Activated CD4-positive, alpha-beta T cell treated with anti-CD3 and anti-CD28 coated beads for 36 hours (primary cell): ENCODE measurements at regions of chr14 and their contacts with region 1.

Region 1: GRCh38 chr14:64294672-64295413 is 672 bp upstream of the ESR2 start:
- DNase-seq: peak; percentile 94
- ATAC-seq: peak; percentile 81
- H3K4me3 Mint-ChIP-seq: peak overlapping the region; percentile 64
- H3K27ac Mint-ChIP-seq: no peak overlapping the region
- H3K4me1 Mint-ChIP-seq: peaks cover 20% of the 10 kb centered on the region
- H3K27me3 Mint-ChIP-seq: peaks cover 25% of the 10 kb centered on the region

Region 2: GRCh38 chr14:63641473-63642228 is 653.2 kb before region 1 on chr14 and contains the start of gene WDR89:
- CTCF ChIA-PET with region 1: no interaction called
- POLR2A ChIA-PET with region 1: no interaction called
- intact Hi-C with region 1: loop called in 1 of 2 experiments (anchors 10 kb)
- DNase-seq: peak; percentile 98
- ATAC-seq: peak; percentile 87
- H3K4me3 Mint-ChIP-seq: peak within 1 kb of the TSS; percentile 79
- H3K27ac Mint-ChIP-seq: peak within 1 kb of the TSS; percentile 97
- H3K4me1 Mint-ChIP-seq: peaks cover 43% of the 10 kb centered on the region
- H3K27me3 Mint-ChIP-seq: no peaks in the 10 kb centered on the region
- total RNA-seq, gene WDR89: 13.9 to 27.2 TPM

Region 3: GRCh38 chr14:64012720-64013119 is 282.1 kb before region 1 on chr14:
- CTCF ChIA-PET with region 1: interaction called, 8 read pairs
- POLR2A ChIA-PET with region 1: no interaction called
- intact Hi-C with region 1: loop called in 1 of 2 experiments (anchors 5 kb)
- DNase-seq: no peak
- ATAC-seq: no peak
- H3K4me3 Mint-ChIP-seq: no peak overlapping the region
- H3K27ac Mint-ChIP-seq: no peak overlapping the region
- H3K4me1 Mint-ChIP-seq: peaks cover 6% of the 10 kb centered on the region
- H3K27me3 Mint-ChIP-seq: no peaks in the 10 kb centered on the region

Region 4: DNA sequence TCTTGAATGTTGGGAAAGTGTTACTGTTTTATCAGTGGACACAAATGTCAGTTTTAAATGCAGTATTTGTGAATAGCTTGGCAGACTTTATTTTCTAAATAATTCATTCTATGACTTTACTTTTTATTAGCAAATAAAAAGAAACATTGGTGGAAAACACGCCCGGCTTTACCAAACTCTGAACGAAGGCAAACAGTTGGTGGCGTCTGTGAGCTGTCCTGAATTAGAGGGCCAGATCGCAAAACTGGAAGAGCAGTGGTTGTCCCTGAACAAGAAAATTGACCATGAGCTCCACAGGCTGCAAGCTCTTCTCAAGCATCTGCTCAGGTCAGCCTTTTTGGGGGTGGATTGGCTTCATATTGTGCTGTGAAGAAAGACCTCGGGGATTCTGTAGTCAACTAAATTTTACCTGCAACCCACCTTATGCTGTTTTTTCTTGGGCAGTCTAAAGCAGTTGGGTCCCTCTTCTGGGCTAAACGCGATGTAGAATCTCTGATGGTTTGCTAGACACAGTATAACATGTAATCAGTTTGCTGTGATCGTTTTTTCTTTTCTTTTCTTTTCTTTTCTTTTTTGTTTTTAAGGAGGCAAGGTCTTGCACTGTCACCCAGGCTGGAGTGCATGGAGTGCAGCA is 157.1 kb before region 1 on chr14:
- CTCF ChIA-PET with region 1: interaction called, 3 read pairs
- POLR2A ChIA-PET with region 1: no interaction called
- intact Hi-C with region 1: loop called in 1 of 2 experiments (anchors 5 kb)
- DNase-seq: peak; percentile 17
- ATAC-seq: no peak
- H3K4me3 Mint-ChIP-seq: no peak overlapping the region
- H3K27ac Mint-ChIP-seq: no peak overlapping the region
- H3K4me1 Mint-ChIP-seq: no peaks in the 10 kb centered on the region
- H3K27me3 Mint-ChIP-seq: no peaks in the 10 kb centered on the region

Region 5: GRCh38 chr14:64232095-64232838 is 62.6 kb before region 1 on chr14:
- CTCF ChIA-PET with region 1: no interaction called
- POLR2A ChIA-PET with region 1: no interaction called
- intact Hi-C with region 1: loop called in 1 of 2 experiments (anchors 2 kb)
- DNase-seq: peak; percentile 42
- ATAC-seq: peak; percentile 76
- H3K4me3 Mint-ChIP-seq: no peak overlapping the region
- H3K27ac Mint-ChIP-seq: no peak overlapping the region
- H3K4me1 Mint-ChIP-seq: peaks cover 14% of the 10 kb centered on the region
- H3K27me3 Mint-ChIP-seq: no peaks in the 10 kb centered on the region

Region 6: GRCh38 chr14:64515083-64515482 is 220.2 kb after region 1 on chr14:
- CTCF ChIA-PET with region 1: no interaction called
- POLR2A ChIA-PET with region 1: no interaction called
- intact Hi-C with region 1: no loop called
- DNase-seq: no peak
- ATAC-seq: no peak
- H3K4me3 Mint-ChIP-seq: no peak overlapping the region
- H3K27ac Mint-ChIP-seq: peak overlapping the region; percentile 31
- H3K4me1 Mint-ChIP-seq: peaks cover 53% of the 10 kb centered on the region
- H3K27me3 Mint-ChIP-seq: no peaks in the 10 kb centered on the region